Heart right ventricle (tissue), 16 donors: ENCODE measurements at regions of chr3 and their contacts with region 1.

Region 1: GRCh38 chr3:113745273-113746068 is 578 bp downstream of the NAA50 start:
- DNase-seq: peak; percentile 45 to 81
- ATAC-seq: peak; percentile 48 to 82 (median 72)
- H3K4me3 ChIP-seq: peak overlapping the region; percentile 71 to 97 (median 86)
- H3K27ac ChIP-seq: peak overlapping the region; percentile 90 to 100 (median 99)
- H3K4me1 ChIP-seq: peaks cover 3 to 74% (median 59%) of the 10 kb centered on the region in 9 donors
- H3K27me3 ChIP-seq: no peaks in the 10 kb centered on the region
- CTCF ChIP-seq: peak in 8 of 9 donors; percentile 16 to 75 (median 64)

Region 2: DNA sequence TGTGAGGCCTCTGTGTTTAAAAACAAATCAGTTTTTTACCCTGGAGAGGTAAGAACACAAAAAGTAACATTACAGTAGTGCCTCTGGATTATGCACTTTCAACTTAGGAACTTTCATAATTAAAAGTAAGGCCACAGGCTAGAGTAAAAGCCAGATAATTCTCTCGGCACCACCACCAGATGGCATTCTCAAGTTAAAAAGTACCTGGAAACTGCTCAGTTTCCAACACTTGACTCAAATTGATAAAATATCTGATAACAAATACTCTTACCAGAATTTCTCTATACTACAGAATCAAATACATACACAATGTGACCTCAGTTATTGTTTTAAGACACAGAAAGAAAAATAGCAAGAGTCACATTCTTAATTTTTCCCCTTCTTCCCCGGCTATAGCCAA is 250.4 kb before region 1 on chr3:
- intact Hi-C with region 1: loop called in 7 of 10 experiments (anchors 5 to 10 kb)
- DNase-seq: peak in 1 of 2 donors; percentile 17
- ATAC-seq: no peak
- H3K4me3 ChIP-seq: no peak overlapping the region
- H3K27ac ChIP-seq: no peak overlapping the region
- H3K4me1 ChIP-seq: no peaks in the 10 kb centered on the region
- H3K27me3 ChIP-seq: no peaks in the 10 kb centered on the region
- CTCF ChIP-seq: peak; percentile 14 to 67 (median 52)

Region 3: DNA sequence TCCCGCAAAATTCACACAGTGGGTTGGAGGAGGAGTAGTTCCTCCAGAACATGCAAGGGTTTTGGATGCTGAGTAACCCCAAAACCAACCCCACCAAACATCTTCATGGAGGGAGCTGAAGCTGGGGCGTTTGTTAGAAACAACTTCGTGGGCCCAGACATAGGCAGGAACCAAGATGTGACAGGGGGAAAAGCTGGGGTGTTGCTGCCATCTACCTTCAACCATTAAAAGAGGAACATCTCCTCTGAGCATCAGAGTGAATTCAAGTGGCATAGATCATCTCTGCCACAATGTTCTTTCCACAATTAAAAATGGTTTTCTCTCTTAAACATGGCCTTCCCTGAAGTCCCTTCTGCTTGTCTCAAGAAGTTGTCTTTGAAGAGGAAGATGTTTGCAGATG is 192.6 kb before region 1 on chr3:
- intact Hi-C with region 1: no loop called
- DNase-seq: no peak
- ATAC-seq: no peak
- H3K4me3 ChIP-seq: no peak overlapping the region
- H3K27ac ChIP-seq: no peak overlapping the region
- H3K4me1 ChIP-seq: no peaks in the 10 kb centered on the region
- H3K27me3 ChIP-seq: peaks cover 0 to 10% (median 0%) of the 10 kb centered on the region in 7 donors
- CTCF ChIP-seq: no peak

Region 4: GRCh38 chr3:113696658-113697499 is 48.6 kb before region 1 on chr3:
- intact Hi-C with region 1: loop called in 5 of 10 experiments (anchors 1 to 5 kb)
- DNase-seq: peak; percentile 98 to 100
- ATAC-seq: peak; percentile 97 to 99 (median 98)
- H3K4me3 ChIP-seq: peak overlapping the region; percentile 73 to 99 (median 89)
- H3K27ac ChIP-seq: peak overlapping the region; percentile 98 to 100 (median 100)
- H3K4me1 ChIP-seq: peaks cover 0 to 50% (median 35%) of the 10 kb centered on the region in 9 donors
- H3K27me3 ChIP-seq: no peaks in the 10 kb centered on the region
- CTCF ChIP-seq: peak in 8 of 9 donors; percentile 7 to 46 (median 26)

Region 5: DNA sequence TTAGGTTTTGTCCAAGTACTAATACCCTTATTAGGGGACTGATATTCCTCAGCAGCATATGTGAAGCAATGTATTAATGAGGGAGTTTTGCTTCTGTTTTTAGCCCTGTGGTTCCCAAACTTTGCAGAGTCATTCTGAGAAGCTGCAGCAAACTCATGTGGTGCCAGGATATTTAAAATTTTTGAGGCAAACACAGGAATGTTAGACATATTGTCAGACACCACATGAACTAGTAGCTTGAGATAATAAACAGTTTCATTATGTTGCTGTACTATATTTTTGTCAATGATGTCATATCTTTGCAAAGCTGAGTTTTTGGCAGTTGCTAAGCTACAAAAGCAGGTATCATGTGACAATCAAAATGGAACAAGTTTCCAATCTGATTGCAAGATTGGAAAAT is 38.0 kb after region 1 on chr3:
- intact Hi-C with region 1: loop called in 2 of 10 experiments (anchors 5 kb)
- DNase-seq: no peak
- ATAC-seq: peak in 2 of 8 donors; percentile 35 to 64
- H3K4me3 ChIP-seq: peak overlapping the region in 3 of 10 donors; percentile 1 to 10 (median 2)
- H3K27ac ChIP-seq: peak overlapping the region in 9 of 10 donors; percentile 31 to 69 (median 51)
- H3K4me1 ChIP-seq: peaks cover 0 to 30% (median 16%) of the 10 kb centered on the region in 9 donors
- H3K27me3 ChIP-seq: no peaks in the 10 kb centered on the region
- CTCF ChIP-seq: no peak

Region 6: GRCh38 chr3:113838631-113839209 is 93.2 kb after region 1 on chr3 and contains the start of gene GRAMD1C:
- intact Hi-C with region 1: loop called in 1 of 10 experiments (anchors 5 kb)
- DNase-seq: peak; percentile 82 to 86
- ATAC-seq: peak; percentile 91 to 99 (median 98)
- H3K4me3 ChIP-seq: peak within 1 kb of the TSS; percentile 14 to 79 (median 60)
- H3K27ac ChIP-seq: peak within 1 kb of the TSS in 6 of 10 donors; percentile 43 to 71 (median 58)
- H3K4me1 ChIP-seq: peaks cover 0 to 9% (median 2%) of the 10 kb centered on the region in 9 donors
- H3K27me3 ChIP-seq: no peaks in the 10 kb centered on the region
- CTCF ChIP-seq: peak; percentile 72 to 91 (median 84)
- total RNA-seq, gene GRAMD1C: 0.37 to 4.7 (median 1.2) TPM

Region 7: GRCh38 chr3:114056130-114057010 is 310.9 kb after region 1 on chr3 and contains the starts of genes CCDC191 and QTRT2:
- intact Hi-C with region 1: loop called in 2 of 10 experiments (anchors 5 to 10 kb)
- DNase-seq: peak; percentile 96 to 100
- ATAC-seq: peak; percentile 99 to 100 (median 100)
- H3K4me3 ChIP-seq: peak within 1 kb of the TSS; percentile 58 to 85 (median 72)
- H3K27ac ChIP-seq: peak within 1 kb of the TSS; percentile 16 to 89 (median 82)
- H3K4me1 ChIP-seq: peaks cover 0 to 31% (median 16%) of the 10 kb centered on the region in 9 donors
- H3K27me3 ChIP-seq: no peaks in the 10 kb centered on the region
- CTCF ChIP-seq: no peak
- total RNA-seq, gene CCDC191: 0.68 to 3.6 (median 1.8) TPM
- total RNA-seq, gene QTRT2: 3.6 to 9.7 (median 5.2) TPM

Region 8: DNA sequence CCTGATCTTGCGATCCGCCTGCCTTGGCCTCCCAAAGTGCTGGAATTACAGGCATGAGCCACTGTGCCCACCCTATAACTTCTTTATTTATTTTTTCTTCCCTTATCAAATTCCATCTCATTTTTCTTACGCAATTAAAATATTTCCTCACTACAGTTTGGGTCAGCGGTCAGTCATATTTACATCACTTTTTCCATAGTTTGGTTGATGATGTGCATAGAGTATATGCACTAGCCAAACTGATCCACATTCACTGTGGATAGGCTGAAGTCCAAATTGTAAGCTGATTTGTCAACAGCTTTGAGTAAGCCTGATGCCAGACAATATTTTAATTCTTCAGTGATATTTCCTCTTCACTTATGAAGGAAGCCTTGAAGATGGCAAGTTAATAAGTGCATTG is 804.7 kb after region 1 on chr3:
- intact Hi-C with region 1: no loop called
- DNase-seq: no peak
- ATAC-seq: no peak
- H3K4me3 ChIP-seq: no peak overlapping the region
- H3K27ac ChIP-seq: no peak overlapping the region
- H3K4me1 ChIP-seq: peaks cover 0 to 29% (median 15%) of the 10 kb centered on the region in 9 donors
- H3K27me3 ChIP-seq: no peaks in the 10 kb centered on the region
- CTCF ChIP-seq: no peak